Activated T-helper 2 cell treated with anti-CD3 and anti-CD28 coated beads, Interferon-gamma antibody, Interleukin-2, Interleukin-4, amounts not matched to agents 10 μg/mL and 5 μg/mL and 100 μg/mL, durations not matched to agents 14 hours and 24 hours and 36 hours (primary cell): ENCODE measurements at regions of chr4 and their contacts with region 1.

Region 1: DNA sequence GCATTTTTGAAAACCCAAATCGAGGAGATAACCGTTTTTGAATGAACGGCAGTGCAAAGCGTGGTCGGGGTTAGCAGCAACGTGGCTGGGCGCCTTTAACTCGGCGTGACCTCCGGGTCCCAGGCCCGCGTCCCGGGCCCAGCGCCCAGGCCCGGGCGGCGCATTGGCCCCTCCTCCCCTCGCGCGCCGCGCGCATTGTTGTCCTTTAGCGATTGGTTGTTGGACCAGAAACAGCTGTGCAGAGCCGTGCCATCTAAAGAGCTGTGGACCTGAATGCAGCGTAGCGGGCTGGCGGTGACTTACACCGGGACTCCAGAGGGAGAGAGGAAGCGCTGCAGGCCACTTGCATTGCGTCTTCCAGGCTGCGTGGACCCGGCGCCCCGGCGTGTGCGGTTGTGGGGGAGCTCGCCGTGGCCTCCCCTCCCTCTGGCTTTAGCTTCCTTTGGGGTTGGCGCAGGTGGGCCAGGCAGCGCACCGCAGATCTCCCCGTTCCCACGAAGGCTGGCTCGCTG is at the start of gene STOX2:
- DNase-seq: no peak
- H3K4me3 Mint-ChIP-seq: peak within 1 kb of the TSS; percentile 30
- H3K27ac Mint-ChIP-seq: no peak within 1 kb of the TSS
- H3K4me1 Mint-ChIP-seq: peaks cover 1% of the 10 kb centered on the region
- H3K27me3 Mint-ChIP-seq: peaks cover 66% of the 10 kb centered on the region
- total RNA-seq, gene STOX2: not detected in 2 replicates

Region 2: GRCh38 chr4:183098723-183099536 is 806.2 kb before region 1 on chr4 and contains the start of gene WWC2:
- intact Hi-C with region 1: loop called (anchors 5 kb)
- DNase-seq: peak; percentile 25
- H3K4me3 Mint-ChIP-seq: peak within 1 kb of the TSS; percentile 21
- H3K27ac Mint-ChIP-seq: no peak within 1 kb of the TSS
- H3K4me1 Mint-ChIP-seq: no peaks in the 10 kb centered on the region
- H3K27me3 Mint-ChIP-seq: peaks cover 57% of the 10 kb centered on the region
- total RNA-seq, gene WWC2: 0.50 and 0.55 TPM in 2 replicates